GM10248 (cell line): ENCODE measurements at regions of chr22 and their contacts with region 1.

Region 1: DNA sequence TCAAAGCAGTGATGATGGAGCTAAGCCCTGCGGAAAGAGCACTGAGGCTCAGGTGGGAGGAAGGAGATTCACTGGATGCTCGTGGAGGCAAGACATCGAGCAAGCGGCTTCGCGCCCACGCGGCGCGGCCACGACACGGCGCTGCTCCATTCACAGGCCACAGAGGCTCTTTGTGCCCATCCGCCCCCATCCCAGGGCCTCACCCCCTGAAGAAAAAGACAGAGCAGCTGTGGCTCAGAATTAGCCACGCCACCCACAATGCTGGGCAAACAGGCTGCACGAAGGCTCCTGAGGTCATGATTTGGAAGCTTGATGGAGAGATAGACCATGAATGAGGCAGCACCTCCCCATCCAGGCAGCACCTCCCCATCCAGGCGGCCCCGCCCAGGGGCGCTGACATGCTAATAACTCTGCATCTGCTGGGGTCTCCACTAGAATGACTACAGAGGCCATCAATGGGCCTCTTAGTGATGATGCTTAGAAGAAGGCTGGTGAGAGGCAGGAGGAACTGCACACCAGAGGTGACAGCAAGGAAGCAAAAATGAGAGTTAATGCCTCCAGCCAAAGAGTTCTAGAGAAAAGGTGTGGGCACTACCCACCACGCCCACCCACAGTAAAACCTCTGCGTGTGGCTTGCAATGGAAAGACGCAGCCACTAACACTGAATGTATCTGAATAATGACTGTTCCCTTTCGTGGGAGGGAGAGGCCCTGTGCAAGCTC is 43.5 kb downstream of the MYH9 start:
- DNase-seq: no peak
- CTCF ChIP-seq: no peak

Region 2: DNA sequence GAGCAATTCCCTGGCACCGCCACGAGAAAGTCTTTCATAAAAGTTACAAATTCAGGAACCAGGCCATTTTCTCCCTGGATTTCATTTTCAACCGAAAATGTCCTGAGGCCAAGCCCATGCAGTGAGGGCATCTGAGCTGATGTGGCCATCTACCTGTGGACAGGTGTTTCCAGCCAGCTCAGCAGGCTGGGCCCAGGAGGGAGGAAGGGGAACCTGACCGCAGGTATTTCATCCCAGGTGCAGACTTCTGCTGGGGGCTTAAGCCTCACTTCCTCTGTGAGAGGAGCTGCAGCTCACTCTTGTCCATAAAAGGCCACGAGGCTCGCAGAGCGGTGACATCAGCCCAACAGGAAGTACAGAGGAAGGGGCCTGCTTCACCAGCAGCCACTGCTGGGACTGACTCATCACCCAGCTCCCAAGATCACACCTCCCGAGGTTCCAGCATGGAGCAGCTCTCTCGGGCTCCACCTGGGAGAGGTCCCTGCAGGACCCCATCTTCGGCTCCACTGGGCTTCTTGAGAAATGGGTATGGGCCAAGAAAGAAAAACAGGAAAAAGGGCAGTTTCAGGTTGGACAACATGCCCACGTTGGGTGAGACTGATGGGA is 12.9 kb before region 1 on chr22:
- CTCF ChIA-PET with region 1: interaction called, 10 read pairs
- POLR2A ChIA-PET with region 1: no interaction called
- DNase-seq: peak; percentile 87
- CTCF ChIP-seq: no peak